ENCODE measurements at regions of chr9 and their contacts with region 1.

Region 1: DNA sequence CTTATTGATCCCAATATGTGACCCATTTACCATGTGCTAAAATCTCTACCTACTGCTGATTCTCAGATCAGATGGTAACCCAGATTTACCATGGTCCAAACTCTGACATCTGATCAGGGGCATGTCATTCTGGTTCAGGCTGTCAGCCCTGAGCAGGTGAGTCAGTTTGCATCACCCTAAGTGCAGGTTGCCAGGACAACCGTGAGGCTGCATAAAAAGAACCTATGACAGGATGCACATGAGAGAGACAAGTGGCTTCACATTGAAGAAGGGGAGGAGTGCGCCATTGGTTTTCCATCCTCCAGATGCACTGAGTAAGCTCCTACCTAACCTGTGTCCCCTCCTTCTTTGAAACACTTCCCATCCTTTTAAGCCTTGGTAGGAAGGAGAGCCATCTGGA is 801 bp upstream of the PRSS3 start:
- DNase-seq: no peak
- ATAC-seq: no peak
- H3K4me3 Mint-ChIP-seq: no peak overlapping the region
- H3K27ac Mint-ChIP-seq: no peak overlapping the region
- H3K4me1 Mint-ChIP-seq: no peaks in the 10 kb centered on the region
- H3K27me3 Mint-ChIP-seq: peaks cover 30% of the 10 kb centered on the region

Region 2: DNA sequence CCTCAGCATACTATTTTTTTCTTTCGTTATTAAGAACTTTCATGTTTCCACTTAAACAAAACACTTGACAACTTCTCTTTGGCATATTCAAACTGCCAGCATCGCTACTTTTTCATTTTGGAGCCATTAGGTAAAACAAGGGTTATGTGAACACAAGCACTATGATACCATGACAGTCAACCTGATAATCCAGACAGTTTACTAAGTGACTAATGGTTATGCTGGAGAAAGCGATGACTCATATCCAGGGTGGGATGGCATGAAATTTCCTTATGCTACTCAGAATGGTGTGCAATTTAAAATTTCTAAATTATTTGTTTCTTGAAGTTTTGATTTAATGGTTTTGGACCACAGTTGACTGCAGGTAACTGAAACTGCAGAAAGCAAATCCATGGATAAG is 29.1 kb before region 1 on chr9:
- POLR2A ChIA-PET with region 1: no interaction called
- DNase-seq: no peak
- ATAC-seq: no peak
- H3K4me3 Mint-ChIP-seq: no peak overlapping the region
- H3K27ac Mint-ChIP-seq: no peak overlapping the region
- H3K4me1 Mint-ChIP-seq: peaks cover 2% of the 10 kb centered on the region
- H3K27me3 Mint-ChIP-seq: peaks cover 2% of the 10 kb centered on the region

Region 3: GRCh38 chr9:33818167-33818846 is 23.7 kb after region 1 on chr9:
- POLR2A ChIA-PET with region 1: interaction called, 12 read pairs
- DNase-seq: no peak
- ATAC-seq: no peak
- H3K4me3 Mint-ChIP-seq: peak overlapping the region; percentile 98
- H3K27ac Mint-ChIP-seq: peak overlapping the region; percentile 97
- H3K4me1 Mint-ChIP-seq: peaks cover 39% of the 10 kb centered on the region
- H3K27me3 Mint-ChIP-seq: no peaks in the 10 kb centered on the region

Measured in activated naive CD8-positive, alpha-beta T cell treated with anti-CD3 and anti-CD28 coated beads, Interleukin-2, amount 10 ng/mL, durations not matched to agents 7 days and 5 days (primary cell).